ENCODE measurements at regions of chr16 and their contacts with region 1.

Region 1: GRCh38 chr16:89507834-89508590 is at the start of gene SPG7:
- DNase-seq: peak; percentile 88
- ATAC-seq: peak; percentile 95
- total RNA-seq, gene SPG7: 78.5 to 99.5 TPM

Region 2: DNA sequence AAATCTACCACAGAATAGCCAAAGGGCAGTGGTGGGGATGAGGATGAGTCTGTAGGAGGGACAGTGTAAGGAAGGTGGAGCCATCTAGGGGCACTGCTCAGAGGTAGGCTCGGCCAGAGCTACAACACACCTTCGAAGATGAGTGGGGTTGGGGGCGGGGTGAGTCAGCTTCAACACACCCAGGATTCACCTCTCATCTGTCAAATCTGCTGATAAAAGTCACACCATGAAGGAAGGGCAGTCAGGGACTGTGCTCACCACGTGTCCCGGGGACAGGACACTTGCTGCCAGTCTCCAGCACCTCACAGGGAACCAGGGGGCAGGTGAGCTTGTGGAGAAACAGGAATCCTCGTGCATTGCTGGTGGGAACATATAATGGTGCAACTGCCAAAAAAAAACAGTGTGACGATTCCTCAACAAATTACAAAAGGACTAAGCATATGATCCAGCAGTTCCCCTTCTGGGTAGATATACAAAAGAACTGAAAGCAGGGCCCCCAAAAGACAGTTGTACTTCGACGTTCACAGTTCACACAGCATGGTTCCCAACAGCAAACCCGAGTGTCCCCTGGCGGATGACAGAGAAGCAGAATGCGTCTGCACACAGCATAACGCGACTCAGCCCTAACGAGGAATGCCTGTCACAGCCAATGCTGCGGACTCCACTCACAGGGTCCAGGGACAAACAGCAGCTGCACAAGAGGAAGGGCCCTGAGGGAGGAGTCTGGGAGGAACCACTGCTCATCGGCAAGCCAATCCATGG is 150.8 kb before region 1 on chr16:
- intact Hi-C with region 1: loop called in 1 of 2 experiments (anchors 10 kb)
- DNase-seq: no peak
- ATAC-seq: peak; percentile 46 to 53